HAP-1 (cell line): ENCODE measurements at regions of chr19 and their contacts with region 1.

Region 1: DNA sequence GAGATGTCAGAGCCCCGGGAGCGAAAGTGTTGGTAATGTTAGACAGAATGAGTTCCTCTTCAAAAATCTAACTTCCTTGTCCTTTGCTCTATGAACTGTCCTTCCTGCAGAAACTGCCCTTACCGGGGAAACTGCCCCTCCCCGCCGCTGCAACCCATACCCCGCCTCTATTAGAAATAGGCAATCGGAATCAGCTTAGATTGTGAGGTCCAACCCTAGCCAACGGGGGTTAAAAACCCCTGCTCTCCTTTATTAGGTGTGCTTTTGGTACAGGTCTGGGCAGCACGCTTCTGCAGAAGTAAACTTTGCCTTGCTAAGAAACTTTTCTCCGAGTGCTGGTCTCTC is 11.5 kb upstream of the CAPNS1 start:
- DNase-seq: peak; percentile 16 to 57
- H3K4me3 ChIP-seq: peak overlapping the region; percentile 45
- H3K4me1 ChIP-seq: peaks cover 11% of the 10 kb centered on the region
- H3K27me3 ChIP-seq: no peaks in the 10 kb centered on the region

Region 2: DNA sequence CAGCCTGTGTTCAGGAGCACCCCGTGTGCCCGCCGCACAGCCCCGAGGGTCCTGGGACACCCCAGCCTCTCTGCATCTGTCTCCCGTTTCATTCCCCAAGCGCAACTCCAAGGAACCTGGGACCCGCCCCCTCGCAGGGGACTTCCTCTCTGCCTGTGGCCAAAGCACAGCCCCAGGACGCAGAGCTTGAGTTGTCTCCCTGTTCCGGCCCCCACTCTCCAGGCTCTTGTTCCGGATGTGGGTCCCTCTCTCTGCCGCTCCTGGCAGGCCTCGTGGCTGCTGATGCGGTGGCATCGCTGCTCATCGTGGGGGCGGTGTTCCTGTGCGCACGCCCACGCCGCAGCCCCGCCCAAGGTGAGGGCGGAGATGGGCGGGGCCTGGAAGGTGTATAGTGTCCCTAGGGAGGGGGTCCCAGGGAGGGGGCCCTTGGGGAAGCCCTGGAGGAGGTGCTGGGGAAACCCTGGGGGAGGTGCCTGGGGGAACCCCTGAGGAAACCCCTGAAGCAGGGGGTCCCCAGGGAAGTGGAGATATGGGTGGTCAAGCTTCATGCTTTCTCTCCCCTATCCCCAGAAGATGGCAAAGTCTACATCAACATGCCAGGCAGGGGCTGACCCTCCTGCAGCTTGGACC is 224.7 kb before region 1 on chr19:
- in situ Hi-C with region 1: no loop called
- DNase-seq: peak; percentile 41 to 79
- H3K4me3 ChIP-seq: peak overlapping the region; percentile 25
- H3K4me1 ChIP-seq: peaks cover 7% of the 10 kb centered on the region; the same call in 1 of the 2 replicates
- H3K27me3 ChIP-seq: no peaks in the 10 kb centered on the region

Region 3: GRCh38 chr19:36172852-36173251 is 44.5 kb after region 1 on chr19:
- in situ Hi-C with region 1: loop called (anchors 5 kb)
- DNase-seq: no peak
- H3K4me3 ChIP-seq: no peak overlapping the region
- H3K4me1 ChIP-seq: peaks cover 9% of the 10 kb centered on the region
- H3K27me3 ChIP-seq: no peaks in the 10 kb centered on the region

Region 4: DNA sequence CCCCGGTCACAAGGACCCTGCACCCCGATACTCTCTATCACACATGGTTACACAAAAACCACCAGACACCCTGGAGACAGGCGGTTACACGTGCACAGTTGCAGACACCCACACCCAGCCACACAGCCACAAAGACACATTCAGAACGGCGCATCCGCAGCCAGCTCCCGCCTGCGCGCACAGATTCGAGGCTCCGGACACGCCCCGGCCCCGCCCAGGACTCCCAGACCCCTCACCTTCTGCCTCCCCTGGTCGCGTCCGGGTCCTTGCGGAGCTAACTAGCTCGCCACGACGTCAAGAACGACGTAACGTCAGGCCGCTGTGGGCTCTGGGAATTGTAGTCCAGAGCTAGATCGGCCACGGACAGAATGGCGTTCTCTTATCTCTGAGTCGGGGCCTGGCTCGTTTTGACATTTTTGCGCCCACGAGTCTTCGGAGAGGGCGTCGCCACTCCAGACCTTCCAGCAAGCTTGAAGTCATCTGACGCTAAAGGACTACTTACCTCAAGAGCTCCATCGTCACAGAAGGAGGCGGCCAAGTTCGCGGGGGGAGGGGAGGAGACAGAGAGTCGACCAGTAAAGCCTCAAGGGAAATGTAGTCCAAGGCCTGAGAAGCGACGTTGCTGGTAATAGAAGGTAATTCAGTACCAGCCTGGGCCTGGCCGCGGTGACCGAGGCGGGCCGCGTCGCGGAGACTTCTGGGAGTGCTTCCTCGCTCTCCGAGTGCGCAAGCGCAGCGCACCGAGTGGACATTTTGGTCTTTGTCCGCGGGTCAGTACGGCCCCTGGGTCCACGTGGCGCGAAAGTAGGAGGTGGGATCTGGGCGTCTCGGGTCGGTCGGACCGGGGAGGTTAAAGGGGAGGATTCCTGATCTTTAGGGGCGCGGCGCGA is 86.3 kb after region 1 on chr19 and contains the starts of genes ZNF146 and ZNF565:
- in situ Hi-C with region 1: no loop called
- DNase-seq: peak; percentile 97 to 99
- H3K4me3 ChIP-seq: peak within 1 kb of the TSS; percentile 59
- H3K4me1 ChIP-seq: peaks cover 4% of the 10 kb centered on the region
- H3K27me3 ChIP-seq: no peaks in the 10 kb centered on the region

Region 5: DNA sequence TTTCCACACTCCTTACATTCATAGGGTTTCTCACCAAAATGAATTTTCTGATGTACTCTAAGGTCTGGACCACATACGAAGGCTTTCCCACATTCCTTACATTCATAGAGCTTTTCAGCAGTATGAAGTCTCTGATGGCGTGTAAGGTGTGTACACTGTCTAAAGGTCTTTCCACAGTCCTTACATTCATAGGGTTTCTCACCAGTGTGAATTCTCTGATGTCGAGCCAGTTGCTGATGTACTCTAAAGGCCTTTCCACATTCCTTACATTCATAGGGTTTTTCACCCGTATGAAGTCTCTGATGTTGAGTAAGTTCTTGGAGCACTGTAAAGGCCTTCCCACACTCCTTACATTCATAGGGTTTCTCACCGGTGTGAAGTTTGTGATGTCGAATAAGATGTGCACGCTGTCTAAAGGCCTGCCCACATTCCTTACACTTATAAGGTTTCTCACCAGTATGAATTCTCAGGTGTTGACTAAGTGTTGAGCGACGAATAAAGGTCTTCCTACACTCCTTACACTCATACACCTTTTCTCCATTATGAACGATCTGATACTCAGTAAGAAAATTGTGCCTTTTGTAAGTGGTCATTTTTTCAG is 212.5 kb after region 1 on chr19:
- in situ Hi-C with region 1: no loop called
- DNase-seq: no peak
- H3K4me3 ChIP-seq: no peak overlapping the region
- H3K4me1 ChIP-seq: no peaks in the 10 kb centered on the region
- H3K27me3 ChIP-seq: no peaks in the 10 kb centered on the region